ENCODE measurements at regions of chr1 and their contacts with region 1.

Region 1: GRCh38 chr1:209607102-209607794 is 23.7 kb downstream of the CAMK1G start:
- DNase-seq: no peak
- ATAC-seq: peak; percentile 90
- H3K4me3 Mint-ChIP-seq: no peak overlapping the region
- H3K27ac Mint-ChIP-seq: no peak overlapping the region
- H3K4me1 Mint-ChIP-seq: no peaks in the 10 kb centered on the region
- H3K27me3 Mint-ChIP-seq: no peaks in the 10 kb centered on the region
- CTCF ChIP-seq: no peak

Region 2: GRCh38 chr1:209674957-209675564 is 67.8 kb after region 1 on chr1 and contains the start of gene G0S2:
- CTCF ChIA-PET with region 1: no interaction called
- POLR2A ChIA-PET with region 1: no interaction called
- intact Hi-C with region 1: loop called (anchors 1 kb)
- DNase-seq: peak; percentile 18
- ATAC-seq: peak; percentile 21
- H3K4me3 Mint-ChIP-seq: peak within 1 kb of the TSS; percentile 75
- H3K27ac Mint-ChIP-seq: peak within 1 kb of the TSS; percentile 72
- H3K4me1 Mint-ChIP-seq: peaks cover 37% of the 10 kb centered on the region
- H3K27me3 Mint-ChIP-seq: peaks cover 49% of the 10 kb centered on the region
- CTCF ChIP-seq: no peak
- total RNA-seq, gene G0S2: 2.1 and 2.3 TPM in 2 replicates

Measured in activated B cell treated with CpG ODN at 0.5 μM for 24 hours (primary cell).